HEK293 (cell line): ENCODE measurements at regions of chr1 and their contacts with region 1.

Region 1: DNA sequence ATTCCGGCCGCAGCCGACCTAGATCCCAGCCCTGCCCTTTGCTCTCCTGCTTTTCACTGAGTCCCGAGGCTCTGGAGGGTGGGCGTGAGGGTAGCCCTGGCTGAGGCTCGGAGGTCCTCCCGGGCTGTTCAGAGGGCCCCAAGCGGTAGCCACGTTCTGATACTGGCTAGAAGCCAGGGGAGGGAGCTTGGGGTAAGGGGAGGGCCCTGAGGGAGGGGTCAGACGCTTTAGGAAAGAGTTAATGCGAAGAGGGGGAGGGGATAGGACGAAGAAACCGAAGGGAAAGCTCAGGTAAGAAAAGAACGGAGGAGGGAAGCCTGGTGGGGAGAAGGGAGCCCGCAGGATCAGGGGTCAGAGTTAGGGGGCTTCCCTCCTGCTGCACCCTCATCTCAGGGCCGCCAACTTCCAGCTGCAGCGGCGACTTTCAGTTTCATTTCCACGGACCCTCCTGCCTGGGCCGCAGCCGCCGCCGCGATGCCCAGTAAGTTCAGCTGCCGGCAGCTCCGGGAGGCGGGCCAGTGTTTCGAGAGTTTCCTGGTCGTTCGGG is at the start of gene MOV10:
- H3K4me3 ChIP-seq: peak within 1 kb of the TSS; percentile 80
- H3K27ac ChIP-seq: peak within 1 kb of the TSS; percentile 85
- H3K4me1 ChIP-seq: peaks cover 5% of the 10 kb centered on the region; the same call in 1 of the 2 replicates
- CTCF ChIP-seq: no peak

Region 2: GRCh38 chr1:112619520-112620376 is 54.8 kb before region 1 on chr1 and contains the start of gene CAPZA1:
- CTCF ChIA-PET with region 1: interaction called, 4 read pairs
- POLR2A ChIA-PET with region 1: interaction called, 22 read pairs
- H3K4me3 ChIP-seq: peak within 1 kb of the TSS; percentile 99
- H3K27ac ChIP-seq: peak within 1 kb of the TSS; percentile 94
- H3K4me1 ChIP-seq: no peaks in the 10 kb centered on the region
- CTCF ChIP-seq: peak; percentile 79

Region 3: GRCh38 chr1:112637254-112638116 is 37.0 kb before region 1 on chr1:
- CTCF ChIA-PET with region 1: no interaction called
- POLR2A ChIA-PET with region 1: interaction called, 12 read pairs
- H3K4me3 ChIP-seq: no peak overlapping the region
- H3K27ac ChIP-seq: peak overlapping the region; percentile 38; the same call in 1 of the 2 replicates
- H3K4me1 ChIP-seq: peaks cover 31% of the 10 kb centered on the region
- CTCF ChIP-seq: no peak

Region 4: GRCh38 chr1:112701227-112702066 is 26.9 kb after region 1 on chr1:
- CTCF ChIA-PET with region 1: interaction called, 12 read pairs
- POLR2A ChIA-PET with region 1: interaction called, 91 read pairs
- H3K4me3 ChIP-seq: no peak overlapping the region
- H3K27ac ChIP-seq: peak overlapping the region; percentile 53
- H3K4me1 ChIP-seq: peaks cover 21% of the 10 kb centered on the region
- CTCF ChIP-seq: no peak

Region 5: DNA sequence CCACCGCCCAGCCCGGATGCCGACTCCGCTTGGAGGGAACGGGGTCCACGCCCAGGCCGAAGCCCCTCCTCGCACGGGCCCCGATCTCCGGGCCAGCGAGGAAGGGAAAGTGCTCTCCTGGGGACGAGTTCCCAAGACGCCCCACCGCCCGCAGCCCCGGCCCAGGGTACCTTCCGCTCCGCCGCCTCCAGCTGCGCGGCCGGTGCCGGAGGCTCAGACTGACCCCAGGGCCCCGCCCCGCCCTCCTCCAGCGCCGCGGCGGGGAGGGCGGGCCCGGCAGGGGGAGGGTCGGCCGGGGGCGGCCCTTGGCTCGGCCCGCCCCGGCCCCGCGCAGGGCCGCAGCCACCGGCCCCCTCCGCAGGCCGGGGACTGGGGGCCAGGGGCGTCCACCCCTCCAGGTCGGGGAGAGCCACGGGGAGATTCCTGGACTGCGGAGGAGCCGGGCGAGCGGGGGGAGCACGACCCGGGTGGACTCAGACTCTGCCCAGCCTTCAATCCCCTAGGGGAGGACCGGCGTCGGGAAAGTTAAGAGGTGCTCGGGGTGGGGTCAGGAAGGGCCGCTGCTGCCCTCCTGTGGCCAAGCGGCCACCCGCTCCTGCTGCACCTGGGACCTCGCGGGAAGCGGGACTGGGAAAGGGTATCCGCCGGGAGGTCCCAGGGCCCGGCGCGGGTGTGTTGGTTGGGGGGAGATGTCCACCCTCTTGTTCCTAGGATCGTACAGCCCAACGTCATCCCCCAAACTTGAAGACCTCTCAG is 32.6 kb after region 1 on chr1 and contains the start of gene RHOC:
- CTCF ChIA-PET with region 1: interaction called, 12 read pairs
- POLR2A ChIA-PET with region 1: interaction called, 91 read pairs
- H3K4me3 ChIP-seq: peak within 1 kb of the TSS; percentile 80
- H3K27ac ChIP-seq: peak within 1 kb of the TSS; percentile 79
- H3K4me1 ChIP-seq: peaks cover 5% of the 10 kb centered on the region
- CTCF ChIP-seq: peak; percentile 97